GM12878 (cell line): ENCODE measurements at regions of chr5 and their contacts with region 1.

Region 1: GRCh38 chr5:32585446-32586275 is at the start of gene SUB1:
- DNase-seq: peak; percentile 62
- ATAC-seq: peak; percentile 66
- H3K4me3 ChIP-seq: peak within 1 kb of the TSS; percentile 81
- H3K27ac ChIP-seq: peak within 1 kb of the TSS; percentile 79
- H3K4me1 ChIP-seq: peaks cover 42% of the 10 kb centered on the region
- H3K27me3 ChIP-seq: no peaks in the 10 kb centered on the region
- CTCF ChIP-seq: no peak
- EP300 ChIP-seq: peak; percentile 46 to 47; a peak in 1 of 4 replicates
- POLR2A ChIP-seq: peak; percentile 94
- RAD21 ChIP-seq: peak; percentile 6; the same call in 1 of the 2 replicates
- polyA plus RNA-seq, gene SUB1: 1,885 to 2,316 TPM

Region 2: GRCh38 chr5:32232441-32233219 is 353.0 kb before region 1 on chr5:
- CTCF ChIA-PET with region 1: interaction called, 13 read pairs
- POLR2A ChIA-PET with region 1: no interaction called
- RAD21 ChIA-PET with region 1: interaction called, 12 read pairs
- SMC1A ChIA-PET with region 1: interaction called, 7 read pairs
- in situ Hi-C with region 1: no loop called
- intact Hi-C with region 1: no loop called
- DNase-seq: peak; percentile 19
- ATAC-seq: peak; percentile 99
- H3K4me3 ChIP-seq: no peak overlapping the region
- H3K27ac ChIP-seq: no peak overlapping the region
- H3K4me1 ChIP-seq: no peaks in the 10 kb centered on the region
- H3K27me3 ChIP-seq: no peaks in the 10 kb centered on the region
- CTCF ChIP-seq: peak; percentile 78 to 87 (median 80)
- EP300 ChIP-seq: no peak
- POLR2A ChIP-seq: no peak
- RAD21 ChIP-seq: peak; percentile 90

Region 3: GRCh38 chr5:32482193-32482592 is 103.5 kb before region 1 on chr5:
- CTCF ChIA-PET with region 1: interaction called, 353 read pairs
- POLR2A ChIA-PET with region 1: no interaction called
- RAD21 ChIA-PET with region 1: interaction called, 258 read pairs
- SMC1A ChIA-PET with region 1: interaction called, 273 read pairs
- in situ Hi-C with region 1: no loop called
- intact Hi-C with region 1: no loop called
- DNase-seq: no peak
- ATAC-seq: no peak
- H3K4me3 ChIP-seq: no peak overlapping the region
- H3K27ac ChIP-seq: no peak overlapping the region
- H3K4me1 ChIP-seq: no peaks in the 10 kb centered on the region
- H3K27me3 ChIP-seq: no peaks in the 10 kb centered on the region
- CTCF ChIP-seq: no peak
- EP300 ChIP-seq: no peak
- POLR2A ChIP-seq: no peak
- RAD21 ChIP-seq: no peak

Region 4: GRCh38 chr5:32504989-32505596 is 80.6 kb before region 1 on chr5:
- CTCF ChIA-PET with region 1: interaction called, 61 read pairs
- POLR2A ChIA-PET with region 1: no interaction called
- RAD21 ChIA-PET with region 1: interaction called, 12 read pairs
- SMC1A ChIA-PET with region 1: interaction called, 15 read pairs
- in situ Hi-C with region 1: no loop called
- intact Hi-C with region 1: no loop called
- DNase-seq: no peak
- ATAC-seq: peak; percentile 53
- H3K4me3 ChIP-seq: no peak overlapping the region
- H3K27ac ChIP-seq: no peak overlapping the region
- H3K4me1 ChIP-seq: peaks cover 9% of the 10 kb centered on the region
- H3K27me3 ChIP-seq: peaks cover 0 to 7% of the 10 kb centered on the region in 2 experiments; a peak in 1 of 4 replicates
- CTCF ChIP-seq: no peak
- EP300 ChIP-seq: no peak
- POLR2A ChIP-seq: no peak
- RAD21 ChIP-seq: no peak

Region 5: GRCh38 chr5:32531885-32532520 is 53.7 kb before region 1 on chr5:
- CTCF ChIA-PET with region 1: interaction called, 134 read pairs
- POLR2A ChIA-PET with region 1: interaction called, 44 read pairs
- RAD21 ChIA-PET with region 1: interaction called, 355 read pairs
- SMC1A ChIA-PET with region 1: interaction called, 505 read pairs
- in situ Hi-C with region 1: loop called (anchors 5 kb)
- intact Hi-C with region 1: loop called (anchors 1 kb)
- DNase-seq: peak; percentile 60
- ATAC-seq: peak; percentile 79
- H3K4me3 ChIP-seq: peak overlapping the region; percentile 70
- H3K27ac ChIP-seq: peak overlapping the region; percentile 77
- H3K4me1 ChIP-seq: peaks cover 33% of the 10 kb centered on the region
- H3K27me3 ChIP-seq: no peaks in the 10 kb centered on the region
- CTCF ChIP-seq: no peak
- EP300 ChIP-seq: no peak
- POLR2A ChIP-seq: no peak; the same call in 1 of the 2 replicates
- RAD21 ChIP-seq: no peak

Region 6: GRCh38 chr5:32600057-32600622 is 14.5 kb after region 1 on chr5:
- CTCF ChIA-PET with region 1: interaction called, 17 read pairs
- POLR2A ChIA-PET with region 1: interaction called, 4 read pairs
- RAD21 ChIA-PET with region 1: interaction called, 14 read pairs
- SMC1A ChIA-PET with region 1: interaction called, 16 read pairs
- in situ Hi-C with region 1: no loop called
- intact Hi-C with region 1: no loop called
- DNase-seq: no peak
- ATAC-seq: no peak
- H3K4me3 ChIP-seq: no peak overlapping the region
- H3K27ac ChIP-seq: no peak overlapping the region
- H3K4me1 ChIP-seq: no peaks in the 10 kb centered on the region; the same call in 1 of the 2 replicates
- H3K27me3 ChIP-seq: no peaks in the 10 kb centered on the region
- CTCF ChIP-seq: no peak
- EP300 ChIP-seq: no peak
- POLR2A ChIP-seq: no peak
- RAD21 ChIP-seq: no peak